Mammary epithelial cell (primary cell): ENCODE measurements at regions of chr10 and their contacts with region 1.

Region 1: DNA sequence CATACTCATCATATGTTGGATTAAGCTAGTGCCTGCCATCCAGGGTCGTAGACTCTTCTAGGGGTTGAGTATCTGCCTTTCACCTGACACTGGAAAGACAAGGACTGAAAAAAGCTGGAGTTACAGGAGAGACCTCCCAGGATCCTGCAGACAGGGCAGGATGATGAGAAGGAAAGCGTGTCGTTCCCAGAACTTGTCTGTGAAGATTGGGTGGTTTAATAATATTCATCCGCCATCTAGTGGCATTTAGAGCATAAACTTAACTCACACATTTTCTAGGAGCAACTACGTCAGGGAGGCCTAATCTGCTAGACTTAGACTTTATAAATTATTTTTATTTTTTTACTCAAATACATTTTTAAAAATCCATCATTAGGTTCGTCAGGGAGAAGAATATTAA is 59.6 kb downstream of the ADRB1 start:
- DNase-seq: peak; percentile 46
- H3K4me3 ChIP-seq: no peak overlapping the region
- H3K27ac ChIP-seq: no peak overlapping the region
- H3K4me1 ChIP-seq: peaks cover 5% of the 10 kb centered on the region
- H3K27me3 ChIP-seq: peaks cover 5% of the 10 kb centered on the region
- CTCF ChIP-seq: peak; percentile 53 to 56

Region 2: DNA sequence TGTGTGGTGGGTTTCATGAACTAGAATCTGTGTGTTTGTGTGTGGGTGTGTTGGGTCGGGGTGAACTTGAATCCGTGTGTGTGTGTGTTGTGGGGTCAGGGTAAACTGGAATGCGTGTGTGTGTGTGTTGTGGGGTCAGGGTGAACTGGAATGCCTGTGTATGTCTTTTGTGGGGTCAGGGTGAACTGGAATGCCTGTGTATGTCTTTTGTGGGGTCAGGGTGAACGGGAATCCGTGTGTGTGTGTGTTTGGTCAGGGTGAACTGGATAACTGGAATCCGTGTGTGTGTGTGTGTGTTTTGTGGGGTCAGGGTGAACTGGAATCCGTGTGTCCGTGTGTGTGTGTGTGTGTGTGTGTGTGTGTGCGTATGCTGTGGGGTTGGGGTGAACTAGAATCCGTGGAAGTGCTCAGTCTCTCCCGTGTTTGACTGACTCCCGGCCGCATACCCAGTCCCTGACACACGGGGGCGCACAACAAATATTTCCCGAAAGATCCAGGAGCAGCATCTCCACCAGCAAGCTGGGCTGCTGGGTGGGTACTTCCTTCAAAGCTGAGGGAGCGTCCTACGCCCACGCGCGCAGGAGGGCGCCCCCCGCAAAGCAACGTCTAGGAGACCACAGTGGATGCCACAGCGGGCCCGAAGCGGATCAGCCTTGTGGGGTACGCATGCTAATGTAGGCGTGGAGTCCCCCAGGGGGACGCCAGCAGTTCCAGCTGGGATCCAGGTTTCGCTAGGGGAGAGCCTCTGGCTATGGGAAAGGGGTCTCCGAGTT is 424.4 kb before region 1 on chr10:
- CTCF ChIA-PET with region 1: no interaction called
- dilution Hi-C with region 1: no loop called
- in situ Hi-C with region 1: no loop called
- intact Hi-C with region 1: loop called (anchors 1 kb)
- DNase-seq: peak; percentile 72
- H3K4me3 ChIP-seq: peak overlapping the region; percentile 74 to 94 (median 94)
- H3K27ac ChIP-seq: peak overlapping the region; percentile 71
- H3K4me1 ChIP-seq: peaks cover 13% of the 10 kb centered on the region
- H3K27me3 ChIP-seq: no peaks in the 10 kb centered on the region
- CTCF ChIP-seq: peak; percentile 72 to 81

Region 3: DNA sequence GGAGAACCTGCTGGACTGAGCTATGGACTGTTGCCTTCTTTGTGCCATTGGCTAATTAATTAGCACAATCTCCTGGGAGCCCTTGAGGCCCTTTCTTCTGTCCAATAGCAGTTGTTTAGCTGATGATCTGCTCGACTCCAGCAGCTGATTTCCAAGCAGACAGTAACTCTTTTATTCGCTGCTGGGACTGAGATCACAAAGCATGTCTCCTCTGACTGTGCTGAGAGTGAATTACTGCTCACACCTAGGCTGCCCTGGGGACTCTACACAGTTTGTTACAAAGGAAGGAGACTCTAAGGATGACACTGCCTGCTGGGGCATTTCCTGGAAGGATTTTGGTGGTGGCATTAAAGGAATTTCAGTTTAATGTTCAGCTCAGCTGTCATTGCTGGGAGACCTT is 392.1 kb before region 1 on chr10:
- CTCF ChIA-PET with region 1: no interaction called
- dilution Hi-C with region 1: no loop called
- in situ Hi-C with region 1: loop called (anchors 5 to 10 kb)
- intact Hi-C with region 1: no loop called
- DNase-seq: no peak
- H3K4me3 ChIP-seq: no peak overlapping the region
- H3K27ac ChIP-seq: no peak overlapping the region
- H3K4me1 ChIP-seq: no peaks in the 10 kb centered on the region
- H3K27me3 ChIP-seq: no peaks in the 10 kb centered on the region
- CTCF ChIP-seq: no peak

Region 4: DNA sequence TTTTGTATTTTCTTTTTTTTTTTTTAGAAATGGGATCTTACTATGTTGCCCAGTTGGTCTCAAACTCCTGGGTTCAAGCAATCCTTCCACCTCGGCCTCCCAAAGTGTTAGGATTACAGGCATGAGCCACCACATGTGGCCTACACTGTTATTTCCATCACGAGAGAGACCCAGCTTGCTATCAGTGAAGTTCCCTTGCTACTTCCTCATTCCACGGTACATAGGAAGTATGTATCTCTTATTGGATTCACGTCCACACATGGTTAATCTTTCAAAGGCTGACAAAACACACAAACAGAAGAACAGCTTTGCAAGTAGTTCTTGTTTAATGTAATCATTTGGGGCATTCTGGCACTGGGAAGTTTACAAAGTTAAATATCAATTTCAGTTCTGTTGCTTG is 300.3 kb before region 1 on chr10:
- CTCF ChIA-PET with region 1: interaction called, 6 read pairs
- dilution Hi-C with region 1: loop called (anchors 25 kb)
- in situ Hi-C with region 1: loop called in 1 of 2 experiments (anchors 5 kb)
- intact Hi-C with region 1: loop called (anchors 1 kb)
- DNase-seq: no peak
- H3K4me3 ChIP-seq: no peak overlapping the region
- H3K27ac ChIP-seq: no peak overlapping the region
- H3K4me1 ChIP-seq: no peaks in the 10 kb centered on the region
- H3K27me3 ChIP-seq: peaks cover 4% of the 10 kb centered on the region
- CTCF ChIP-seq: no peak

Region 5: DNA sequence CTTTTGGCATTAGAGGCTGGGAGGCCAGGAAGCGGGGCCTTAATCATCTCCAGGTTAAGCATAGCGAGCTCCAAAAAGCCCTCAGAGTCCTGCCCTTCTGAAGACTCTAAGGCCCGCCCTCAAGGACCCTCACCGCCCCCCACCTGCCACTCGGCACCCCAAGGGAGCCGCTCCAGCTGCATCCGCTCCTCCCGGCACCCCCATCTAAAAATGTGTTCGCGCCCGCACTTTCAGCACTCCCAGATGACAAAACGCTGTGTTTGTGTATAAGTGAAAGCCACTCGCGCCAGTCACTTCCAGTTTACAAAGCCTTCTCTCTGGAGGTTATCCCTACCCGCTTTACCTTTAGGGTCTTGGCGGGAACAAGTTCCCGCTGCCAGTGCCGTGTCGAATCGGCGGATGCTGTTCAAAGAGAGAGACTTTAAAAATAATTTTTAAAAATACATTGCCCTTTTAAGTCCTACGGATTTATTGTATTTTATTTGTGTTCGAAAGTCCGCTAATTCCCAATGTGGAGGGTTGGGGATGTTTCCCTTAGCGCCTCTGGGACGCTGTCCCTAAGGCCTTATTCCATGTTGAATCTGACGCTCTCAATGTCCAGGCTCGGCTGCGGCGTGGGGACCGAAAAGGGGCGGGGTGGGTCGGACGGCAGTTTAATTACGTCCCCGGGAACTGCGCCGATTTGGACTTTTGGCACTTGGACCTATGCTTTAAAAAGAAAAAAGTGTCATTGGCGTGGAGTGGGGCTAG is 249.1 kb before region 1 on chr10 and contains the starts of genes DCLRE1A and NHLRC2:
- CTCF ChIA-PET with region 1: no interaction called
- dilution Hi-C with region 1: no loop called
- in situ Hi-C with region 1: no loop called
- intact Hi-C with region 1: loop called (anchors 2 kb)
- DNase-seq: peak; percentile 78
- H3K4me3 ChIP-seq: peak within 1 kb of the TSS; percentile 90 to 95 (median 91)
- H3K27ac ChIP-seq: peak within 1 kb of the TSS; percentile 89
- H3K4me1 ChIP-seq: peaks cover 16% of the 10 kb centered on the region
- H3K27me3 ChIP-seq: no peaks in the 10 kb centered on the region
- CTCF ChIP-seq: no peak
- total RNA-seq, gene DCLRE1A: 6.5 TPM
- total RNA-seq, gene NHLRC2: 17.5 to 29.7 TPM

Region 6: DNA sequence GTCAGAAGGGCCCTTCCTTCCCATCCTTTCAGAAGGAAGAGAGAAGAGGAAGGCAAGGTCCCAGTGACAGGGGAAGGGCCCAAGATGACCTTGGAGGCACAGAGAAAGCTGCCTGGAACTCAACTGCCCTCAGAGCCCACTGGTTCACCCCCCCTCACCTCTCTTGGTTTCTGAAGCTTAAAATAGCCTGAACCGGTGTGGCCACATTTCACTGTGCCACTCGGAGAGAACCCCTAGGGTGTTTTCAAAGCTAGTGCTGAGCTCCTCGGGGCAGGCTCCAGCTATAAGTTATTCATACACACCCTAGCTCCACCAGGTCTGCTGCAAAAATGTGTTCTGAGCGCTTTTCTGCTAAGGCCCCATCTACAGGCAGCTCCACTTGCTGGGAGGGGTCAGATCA is 120.5 kb before region 1 on chr10:
- CTCF ChIA-PET with region 1: no interaction called
- dilution Hi-C with region 1: no loop called
- in situ Hi-C with region 1: no loop called
- intact Hi-C with region 1: loop called (anchors 5 kb)
- DNase-seq: no peak
- H3K4me3 ChIP-seq: no peak overlapping the region
- H3K27ac ChIP-seq: no peak overlapping the region
- H3K4me1 ChIP-seq: no peaks in the 10 kb centered on the region
- H3K27me3 ChIP-seq: no peaks in the 10 kb centered on the region
- CTCF ChIP-seq: no peak